ENCODE measurements at regions of chr1 and their contacts with region 1.

Region 1: GRCh38 chr1:220281159-220281574 is 8.9 kb upstream of the RAB3GAP2 start:
- DNase-seq: no peak
- CTCF ChIP-seq: peak; percentile 12

Region 2: DNA sequence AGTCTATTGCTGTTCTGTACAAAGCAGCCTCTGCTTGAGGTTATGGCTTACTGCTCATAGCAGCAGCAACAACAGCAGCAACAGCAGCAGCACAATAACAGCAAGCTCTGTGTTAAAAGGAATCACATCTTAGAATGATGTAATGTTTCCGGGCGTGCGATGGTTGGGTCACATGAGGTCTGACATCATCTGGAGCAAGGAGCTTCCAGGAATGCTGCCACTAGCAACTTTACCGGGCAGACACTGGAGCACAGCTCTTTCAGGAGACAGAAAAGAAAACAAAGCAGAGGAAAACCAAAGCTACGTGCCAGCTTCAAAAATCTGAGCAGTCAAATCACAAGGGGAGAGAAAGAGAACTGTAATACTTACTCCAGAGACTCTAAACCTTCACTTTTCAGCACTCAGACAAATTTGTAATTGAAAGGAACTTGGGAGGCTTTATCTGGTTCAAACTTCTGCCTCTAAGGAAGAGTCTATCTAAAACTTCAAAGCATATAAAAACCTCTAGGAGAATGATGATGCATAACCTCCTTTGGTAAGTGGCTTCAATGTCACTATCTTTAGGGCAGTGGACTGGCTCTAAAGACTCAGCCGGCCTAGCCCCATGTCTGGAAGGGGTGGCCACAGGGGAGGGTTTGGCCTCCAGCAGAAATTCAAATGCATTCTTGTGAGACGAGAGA is 19.4 kb after region 1 on chr1:
- CTCF ChIA-PET with region 1: interaction called, 140 read pairs
- POLR2A ChIA-PET with region 1: no interaction called
- DNase-seq: no peak
- CTCF ChIP-seq: no peak

Region 3: GRCh38 chr1:220326578-220326977 is 45.4 kb after region 1 on chr1:
- CTCF ChIA-PET with region 1: no interaction called
- POLR2A ChIA-PET with region 1: no interaction called
- DNase-seq: no peak
- CTCF ChIP-seq: no peak